Kidney (tissue), 22 donors: ENCODE measurements at regions of chr1 and their contacts with region 1.

Region 1: GRCh38 chr1:151739590-151740375 is 18.5 kb downstream of the RIIAD1 start:
- DNase-seq: peak in 2 of 5 donors; percentile 46 to 50
- H3K4me3 ChIP-seq: no peak overlapping the region
- H3K27ac ChIP-seq: peak overlapping the region in 1 of 2 donors; percentile 63
- H3K4me1 ChIP-seq: peaks cover 0 to 6% (median 0%) of the 10 kb centered on the region in 3 donors
- H3K27me3 ChIP-seq: no peaks in the 10 kb centered on the region
- CTCF ChIP-seq: no peak

Region 2: GRCh38 chr1:151539990-151540981 is 199.5 kb before region 1 on chr1 and contains the start of gene TUFT1:
- intact Hi-C with region 1: loop called (anchors 10 kb)
- DNase-seq: peak; percentile 94 to 97 (median 97)
- H3K4me3 ChIP-seq: peak within 1 kb of the TSS; percentile 79 to 86 (median 83)
- H3K27ac ChIP-seq: peak within 1 kb of the TSS; percentile 97 to 98
- H3K4me1 ChIP-seq: peaks cover 0 to 18% (median 4%) of the 10 kb centered on the region in 3 donors
- H3K27me3 ChIP-seq: no peaks in the 10 kb centered on the region
- CTCF ChIP-seq: no peak
- total RNA-seq, gene TUFT1: 12.9 TPM

Region 3: GRCh38 chr1:151606395-151606794 is 133.4 kb before region 1 on chr1:
- intact Hi-C with region 1: loop called (anchors 10 kb)
- DNase-seq: no peak
- H3K4me3 ChIP-seq: no peak overlapping the region
- H3K27ac ChIP-seq: peak overlapping the region; percentile 23 to 66
- H3K4me1 ChIP-seq: peaks cover 0 to 4% (median 2%) of the 10 kb centered on the region in 3 donors
- H3K27me3 ChIP-seq: no peaks in the 10 kb centered on the region
- CTCF ChIP-seq: no peak

Region 4: DNA sequence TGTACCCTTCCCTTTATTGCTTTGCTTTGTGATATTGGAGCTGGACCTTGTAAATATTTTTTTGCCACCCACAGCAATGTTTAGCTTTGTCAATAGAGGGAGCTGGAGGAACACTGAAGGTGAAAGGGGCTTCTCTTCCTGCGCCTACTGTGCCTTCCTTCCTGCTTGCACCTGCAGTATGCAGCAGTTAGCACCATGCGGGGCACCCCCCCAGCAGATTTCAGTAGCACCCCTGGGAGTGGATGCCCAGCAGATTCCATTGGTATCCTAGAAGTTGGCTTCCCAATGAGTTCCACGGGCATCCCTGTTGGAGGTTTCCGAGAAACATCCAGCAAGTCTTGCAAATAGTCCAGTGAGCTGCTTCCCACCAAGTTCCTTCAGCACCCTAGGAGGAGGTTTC is 228.3 kb after region 1 on chr1:
- intact Hi-C with region 1: no loop called
- DNase-seq: no peak
- H3K4me3 ChIP-seq: no peak overlapping the region
- H3K27ac ChIP-seq: no peak overlapping the region
- H3K4me1 ChIP-seq: peaks cover 4 to 9% (median 5%) of the 10 kb centered on the region in 3 donors
- H3K27me3 ChIP-seq: peaks cover 2% of the 10 kb centered on the region
- CTCF ChIP-seq: peak; percentile 87